Activated CD4-positive, alpha-beta memory T cell treated with anti-CD3 and anti-CD28 coated beads for 36 hours (primary cell): ENCODE measurements at regions of chr1 and their contacts with region 1.

Region 1: GRCh38 chr1:23184212-23184934 is 15.7 kb upstream of the LUZP1 start:
- DNase-seq: peak; percentile 22
- H3K4me3 Mint-ChIP-seq: peak overlapping the region; percentile 55
- H3K27ac Mint-ChIP-seq: no peak overlapping the region
- H3K4me1 Mint-ChIP-seq: peaks cover 5% of the 10 kb centered on the region
- H3K27me3 Mint-ChIP-seq: peaks cover 4% of the 10 kb centered on the region

Region 2: DNA sequence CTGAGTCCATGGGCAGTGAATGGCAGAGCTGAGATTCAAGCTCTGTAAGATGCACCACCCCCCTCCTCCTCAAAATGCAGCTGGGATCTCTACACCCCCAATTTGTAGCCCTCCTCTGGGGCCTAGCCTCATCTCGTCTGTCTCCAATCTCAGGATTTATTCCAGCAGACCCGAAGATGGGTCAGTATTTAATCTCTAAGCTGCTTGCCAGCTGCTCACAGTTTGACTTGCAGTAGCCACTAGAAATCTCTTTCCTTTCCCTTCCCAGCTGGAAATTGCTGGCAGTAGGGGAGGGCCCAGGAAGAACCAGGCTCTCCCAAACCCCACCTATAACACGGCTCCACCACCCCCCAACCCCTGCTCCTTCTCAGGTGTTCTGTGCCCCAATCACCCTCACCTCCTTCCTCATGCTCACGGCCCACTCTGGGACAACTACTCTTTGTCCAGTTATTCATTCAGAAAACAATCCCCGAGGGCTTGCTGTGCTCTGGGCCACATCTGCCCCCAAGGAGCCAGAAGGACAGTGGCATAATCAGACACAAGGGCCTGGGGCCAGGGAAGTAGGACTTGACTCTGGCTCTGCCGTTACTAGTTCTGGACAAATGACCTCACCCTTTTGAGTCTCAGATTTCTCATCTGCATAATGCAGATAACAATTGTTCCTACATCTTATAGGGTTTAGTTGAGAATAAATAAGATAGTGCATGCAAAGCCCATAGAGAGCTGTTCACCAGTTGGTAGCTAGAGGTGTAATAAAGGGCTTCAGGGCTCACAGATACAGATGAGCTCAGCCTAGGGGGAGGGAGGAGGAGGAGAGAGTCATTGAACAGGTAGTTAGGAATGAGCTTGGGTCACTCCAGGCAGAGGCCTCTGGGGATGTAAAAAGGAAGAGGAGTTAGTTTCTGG is 213.0 kb before region 1 on chr1:
- CTCF ChIA-PET with region 1: interaction called, 11 read pairs
- POLR2A ChIA-PET with region 1: no interaction called
- intact Hi-C with region 1: no loop called
- DNase-seq: no peak
- H3K4me3 Mint-ChIP-seq: no peak overlapping the region
- H3K27ac Mint-ChIP-seq: no peak overlapping the region
- H3K4me1 Mint-ChIP-seq: no peaks in the 10 kb centered on the region
- H3K27me3 Mint-ChIP-seq: peaks cover 39% of the 10 kb centered on the region

Region 3: GRCh38 chr1:23081376-23081775 is 103.0 kb before region 1 on chr1:
- CTCF ChIA-PET with region 1: interaction called, 738 read pairs
- POLR2A ChIA-PET with region 1: no interaction called
- intact Hi-C with region 1: no loop called
- DNase-seq: no peak
- H3K4me3 Mint-ChIP-seq: no peak overlapping the region
- H3K27ac Mint-ChIP-seq: no peak overlapping the region
- H3K4me1 Mint-ChIP-seq: no peaks in the 10 kb centered on the region
- H3K27me3 Mint-ChIP-seq: no peaks in the 10 kb centered on the region

Region 4: GRCh38 chr1:23108918-23109533 is 75.3 kb before region 1 on chr1:
- CTCF ChIA-PET with region 1: interaction called, 738 read pairs
- POLR2A ChIA-PET with region 1: interaction called, 4 read pairs
- intact Hi-C with region 1: no loop called
- DNase-seq: peak; percentile 66
- H3K4me3 Mint-ChIP-seq: no peak overlapping the region
- H3K27ac Mint-ChIP-seq: peak overlapping the region; percentile 77
- H3K4me1 Mint-ChIP-seq: peaks cover 67% of the 10 kb centered on the region
- H3K27me3 Mint-ChIP-seq: no peaks in the 10 kb centered on the region

Region 5: DNA sequence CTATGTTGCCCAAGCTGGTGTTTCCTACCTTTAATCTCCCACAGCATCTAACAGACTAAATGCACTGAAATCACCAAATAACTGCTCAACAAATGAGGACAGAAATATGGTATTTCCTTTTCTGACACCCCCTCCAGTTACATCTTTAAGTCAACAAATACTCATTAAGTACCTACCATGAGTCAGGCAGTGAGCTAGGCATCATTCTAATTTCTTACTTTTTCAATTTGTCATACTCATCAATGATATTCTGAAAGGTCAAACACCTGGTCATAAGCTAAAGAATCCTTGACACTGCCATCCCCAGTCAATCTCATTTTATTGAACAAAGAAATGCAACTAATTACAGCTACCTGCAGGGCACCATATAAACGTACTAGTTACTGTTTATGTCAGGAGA is 52.3 kb before region 1 on chr1:
- CTCF ChIA-PET with region 1: interaction called, 11 read pairs
- POLR2A ChIA-PET with region 1: no interaction called
- intact Hi-C with region 1: no loop called
- DNase-seq: no peak
- H3K4me3 Mint-ChIP-seq: no peak overlapping the region
- H3K27ac Mint-ChIP-seq: peak overlapping the region; percentile 6
- H3K4me1 Mint-ChIP-seq: peaks cover 15% of the 10 kb centered on the region
- H3K27me3 Mint-ChIP-seq: no peaks in the 10 kb centered on the region

Region 6: DNA sequence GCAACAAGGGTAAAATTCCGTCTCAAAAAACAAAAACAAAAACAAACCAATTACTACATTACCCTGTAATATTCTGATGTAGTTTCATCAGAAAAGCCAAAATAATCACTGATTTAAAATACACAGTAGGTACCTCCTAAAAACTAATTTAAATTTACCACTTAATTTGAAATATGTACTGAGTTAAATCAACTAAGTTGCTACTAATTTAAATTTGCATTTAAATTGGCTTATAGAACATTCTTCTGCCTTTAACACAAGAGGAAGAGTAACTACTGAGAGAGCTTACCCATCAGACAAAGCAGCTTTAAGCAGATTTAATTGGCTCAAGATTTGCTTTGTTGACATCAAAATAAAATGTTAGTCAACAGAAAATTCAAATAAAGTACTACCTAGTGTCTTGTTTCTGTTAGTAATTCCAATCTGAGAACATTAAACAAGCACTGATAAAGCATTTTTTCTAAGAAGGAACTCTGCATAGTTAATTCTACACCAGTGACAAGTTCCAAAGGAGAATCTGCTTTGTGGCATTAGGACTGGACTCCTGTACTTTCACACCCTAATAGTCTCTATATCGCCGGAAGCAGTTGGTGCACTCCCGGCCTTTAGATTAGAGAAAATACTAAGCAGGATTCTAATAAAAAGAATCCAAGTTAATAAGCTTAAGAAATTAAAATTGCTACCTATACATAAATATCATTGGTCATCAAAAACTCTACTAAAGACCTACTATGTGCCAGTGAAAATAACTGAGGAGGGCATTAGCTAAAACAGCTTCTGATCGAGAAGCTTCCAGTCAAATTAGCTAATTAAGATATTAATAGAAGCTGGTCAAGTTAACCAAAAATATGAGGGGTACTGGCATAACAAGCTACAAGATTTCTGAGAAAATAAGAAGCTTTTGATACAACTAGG is 24.2 kb before region 1 on chr1:
- CTCF ChIA-PET with region 1: interaction called, 25 read pairs
- POLR2A ChIA-PET with region 1: no interaction called
- intact Hi-C with region 1: no loop called
- DNase-seq: no peak
- H3K4me3 Mint-ChIP-seq: no peak overlapping the region
- H3K27ac Mint-ChIP-seq: no peak overlapping the region
- H3K4me1 Mint-ChIP-seq: peaks cover 14% of the 10 kb centered on the region
- H3K27me3 Mint-ChIP-seq: no peaks in the 10 kb centered on the region

Region 7: GRCh38 chr1:23196639-23197328 is 12.4 kb after region 1 on chr1:
- CTCF ChIA-PET with region 1: interaction called, 41 read pairs
- POLR2A ChIA-PET with region 1: no interaction called
- intact Hi-C with region 1: no loop called
- DNase-seq: no peak
- H3K4me3 Mint-ChIP-seq: no peak overlapping the region
- H3K27ac Mint-ChIP-seq: no peak overlapping the region
- H3K4me1 Mint-ChIP-seq: no peaks in the 10 kb centered on the region
- H3K27me3 Mint-ChIP-seq: peaks cover 5% of the 10 kb centered on the region